IMR-90 (cell line): ENCODE measurements at regions of chr2 and their contacts with region 1.

Region 1: DNA sequence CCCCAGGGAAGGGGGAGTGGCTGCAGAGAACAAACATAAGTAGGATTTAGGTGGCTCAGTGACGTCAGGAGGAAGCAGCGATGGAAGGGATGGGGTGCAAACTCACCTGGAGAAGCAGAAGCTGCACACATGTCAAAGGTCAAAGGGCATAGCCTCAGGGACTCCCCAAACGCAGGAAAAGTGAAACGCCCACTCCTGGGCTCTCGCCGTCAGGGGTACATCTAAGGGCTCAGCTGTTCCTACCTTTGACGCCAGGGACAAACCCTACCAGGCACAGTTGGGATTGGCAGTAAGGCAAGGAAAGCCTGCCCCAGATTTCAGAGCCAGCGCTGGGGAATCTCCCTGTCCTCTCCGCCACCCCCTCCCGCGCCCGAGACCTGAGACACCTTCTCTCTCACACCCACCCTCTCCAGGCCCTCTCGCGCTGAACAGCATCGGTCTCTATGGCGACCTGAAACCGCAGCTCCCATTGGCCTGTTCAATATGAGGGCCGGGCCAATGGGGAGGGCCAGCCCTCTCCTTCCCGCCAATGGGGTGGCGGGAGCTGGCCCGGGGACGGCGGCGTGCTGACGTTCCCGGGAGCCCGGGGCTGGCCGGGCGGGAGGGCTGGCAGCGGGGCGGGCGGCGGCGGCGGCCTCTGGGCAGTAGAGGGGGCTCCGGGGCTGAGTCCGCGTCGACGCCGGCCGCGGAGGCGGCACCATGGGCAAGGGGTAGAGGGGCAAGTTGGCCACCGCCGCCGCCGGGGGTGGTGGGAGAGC is at the starts of genes CCDC148 and PKP4:
- DNase-seq: peak; percentile 89
- ATAC-seq: peak; percentile 92
- H3K4me3 ChIP-seq: peak within 1 kb of the TSS; percentile 90
- H3K27ac ChIP-seq: peak within 1 kb of the TSS; percentile 76
- H3K4me1 ChIP-seq: peaks cover 2% of the 10 kb centered on the region
- H3K27me3 ChIP-seq: peaks cover 4% of the 10 kb centered on the region; the same call in 1 of the 2 replicates
- CTCF ChIP-seq: peak; percentile 33
- POLR2A ChIP-seq: 0 out of 2 replicates have a peak, but pooled peaks have one; percentile 17
- RAD21 ChIP-seq: peak; percentile 4; the same call in 1 of the 2 replicates
- total RNA-seq, gene CCDC148: 0.18 and 0.56 TPM in 2 replicates
- total RNA-seq, gene PKP4: 37.5 and 37.8 TPM in 2 replicates

Region 2: DNA sequence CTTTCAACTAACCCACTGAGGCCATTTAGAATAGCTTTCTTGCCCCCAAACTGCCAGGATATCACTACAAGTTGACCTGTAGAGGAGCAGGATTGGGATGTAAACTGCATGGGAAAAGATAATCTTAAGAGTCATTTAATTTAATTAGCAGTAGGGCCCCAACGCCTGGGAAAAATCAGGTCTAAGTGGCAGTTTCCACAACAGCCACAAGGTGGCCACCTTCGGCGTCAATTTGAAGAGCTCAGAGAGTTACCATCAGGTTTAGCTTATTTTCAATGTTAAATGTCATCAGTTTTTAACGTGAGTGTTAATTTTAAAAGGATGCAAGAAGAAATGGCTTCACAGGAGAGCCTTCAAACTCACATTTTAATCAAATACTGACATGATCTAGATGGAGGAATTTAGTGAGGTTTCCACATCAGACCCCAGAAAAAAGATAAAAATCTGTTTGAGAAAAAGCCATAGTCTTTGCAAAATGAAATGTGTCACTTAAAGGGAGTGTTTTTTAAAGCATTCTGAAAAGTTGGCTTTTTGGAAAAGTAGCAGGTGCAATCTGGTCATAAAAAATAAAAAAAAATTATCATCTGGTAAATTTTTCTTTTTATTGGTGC is 432.1 kb before region 1 on chr2:
- CTCF ChIA-PET with region 1: no interaction called
- POLR2A ChIA-PET with region 1: no interaction called
- dilution Hi-C with region 1: no loop called
- in situ Hi-C with region 1: no loop called
- intact Hi-C with region 1: loop called (anchors 2 kb)
- DNase-seq: peak; percentile 31
- ATAC-seq: peak; percentile 76
- H3K4me3 ChIP-seq: no peak overlapping the region
- H3K27ac ChIP-seq: no peak overlapping the region
- H3K4me1 ChIP-seq: peaks cover 2% of the 10 kb centered on the region; the same call in 1 of the 2 replicates
- H3K27me3 ChIP-seq: peaks cover 6% of the 10 kb centered on the region; the same call in 1 of the 2 replicates
- CTCF ChIP-seq: peak; percentile 82
- POLR2A ChIP-seq: no peak
- RAD21 ChIP-seq: peak; percentile 70

Region 3: DNA sequence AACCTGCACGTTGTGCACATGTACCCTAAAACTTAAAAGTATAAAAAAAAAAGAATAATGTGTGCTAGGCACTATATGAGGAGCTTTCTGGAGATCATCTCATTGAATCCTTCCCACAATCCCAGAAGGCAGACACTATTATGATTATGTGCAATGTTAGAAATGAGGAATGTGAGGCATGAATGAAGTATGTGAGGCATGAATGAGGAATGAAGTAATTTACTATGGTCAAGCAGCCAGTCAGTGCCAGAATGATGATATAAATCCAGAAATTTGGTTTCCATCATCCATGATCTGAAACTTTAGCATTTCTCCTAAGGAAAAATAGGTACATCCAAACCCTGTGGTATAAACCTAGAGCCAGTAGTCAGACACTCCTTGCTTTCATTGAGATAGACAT is 42.0 kb before region 1 on chr2:
- CTCF ChIA-PET with region 1: no interaction called
- POLR2A ChIA-PET with region 1: no interaction called
- dilution Hi-C with region 1: no loop called
- in situ Hi-C with region 1: no loop called
- intact Hi-C with region 1: loop called (anchors 2 kb)
- DNase-seq: peak; percentile 64
- ATAC-seq: peak; percentile 66
- H3K4me3 ChIP-seq: no peak overlapping the region
- H3K27ac ChIP-seq: peak overlapping the region; percentile 34; the same call in 1 of the 2 replicates
- H3K4me1 ChIP-seq: peaks cover 10% of the 10 kb centered on the region; the same call in 1 of the 2 replicates
- H3K27me3 ChIP-seq: no peaks in the 10 kb centered on the region
- CTCF ChIP-seq: no peak
- POLR2A ChIP-seq: no peak
- RAD21 ChIP-seq: no peak

Region 4: DNA sequence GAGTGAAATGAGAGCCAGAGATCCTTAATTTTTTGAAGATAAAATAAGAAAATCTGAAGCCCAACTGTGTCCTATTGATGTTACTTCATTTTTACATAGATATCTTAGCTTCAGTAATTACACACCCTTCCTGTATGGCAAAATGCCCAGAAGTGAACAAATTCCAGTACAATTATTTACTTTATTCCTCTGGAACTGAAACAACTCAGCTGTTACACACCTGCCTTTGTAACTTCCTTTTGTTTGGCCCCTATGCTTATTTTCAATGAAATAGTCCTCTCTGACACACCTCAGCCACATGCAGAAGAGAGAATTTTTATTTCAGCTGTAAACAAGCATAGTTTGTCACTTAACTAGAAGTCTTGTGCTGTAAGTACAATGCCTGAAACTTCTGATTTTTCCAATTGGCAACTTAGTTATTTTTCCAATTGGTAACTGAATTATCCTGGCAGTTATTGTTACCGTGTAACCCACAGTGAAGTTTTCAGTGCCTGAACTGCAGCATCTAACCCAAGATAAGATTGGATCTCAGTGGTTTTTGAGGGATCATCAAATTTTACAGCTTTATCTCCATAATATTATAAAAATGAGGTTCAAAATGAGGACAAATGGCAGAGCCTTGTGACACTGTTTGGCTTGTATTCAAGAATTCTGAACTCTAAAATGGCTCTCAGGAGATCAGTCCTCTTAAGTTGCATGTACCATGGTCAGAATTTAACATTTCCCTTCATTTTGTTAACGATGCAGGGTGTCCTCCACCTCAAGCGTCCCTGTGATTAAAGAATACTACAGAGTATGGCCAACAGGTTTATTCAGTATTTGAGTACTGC is 82.9 kb after region 1 on chr2:
- CTCF ChIA-PET with region 1: no interaction called
- POLR2A ChIA-PET with region 1: no interaction called
- dilution Hi-C with region 1: no loop called
- in situ Hi-C with region 1: no loop called
- intact Hi-C with region 1: loop called (anchors 5 kb)
- DNase-seq: peak; percentile 90
- ATAC-seq: peak; percentile 46
- H3K4me3 ChIP-seq: no peak overlapping the region
- H3K27ac ChIP-seq: no peak overlapping the region
- H3K4me1 ChIP-seq: no peaks in the 10 kb centered on the region; the same call in 1 of the 2 replicates
- H3K27me3 ChIP-seq: no peaks in the 10 kb centered on the region
- CTCF ChIP-seq: no peak
- POLR2A ChIP-seq: no peak
- RAD21 ChIP-seq: no peak

Region 5: DNA sequence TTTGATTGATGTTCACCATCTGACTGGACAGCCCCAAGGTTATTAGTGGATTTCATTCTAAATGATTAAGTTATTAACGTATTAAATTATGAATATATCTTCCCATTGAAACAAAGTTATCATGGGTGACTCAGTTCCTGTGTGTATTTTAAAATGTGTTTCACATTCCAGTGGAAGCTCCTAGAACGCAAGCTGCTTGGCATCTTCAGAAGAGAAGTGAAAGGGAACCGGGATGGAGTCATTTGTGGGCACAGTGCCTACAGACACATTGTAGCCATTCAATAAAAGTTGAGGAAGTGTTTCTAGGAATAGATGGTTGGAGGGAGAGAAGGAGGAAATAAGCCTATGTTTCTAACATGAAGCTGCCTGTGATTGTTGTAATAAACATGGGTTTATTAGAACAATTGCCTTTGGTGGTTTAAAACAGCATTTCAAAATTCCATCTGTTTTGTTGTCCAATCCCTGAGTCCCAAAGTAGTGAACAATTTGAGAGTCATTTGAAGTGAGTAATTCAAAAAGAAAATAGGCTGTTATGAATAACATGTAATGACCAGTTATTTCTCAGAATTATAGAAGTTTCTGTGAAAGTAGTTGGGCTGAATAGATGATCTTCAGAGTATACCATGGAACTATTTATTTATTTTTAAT is 143.8 kb after region 1 on chr2:
- CTCF ChIA-PET with region 1: no interaction called
- POLR2A ChIA-PET with region 1: no interaction called
- dilution Hi-C with region 1: no loop called
- in situ Hi-C with region 1: no loop called
- intact Hi-C with region 1: loop called (anchors 5 kb)
- DNase-seq: peak; percentile 95
- ATAC-seq: peak; percentile 91
- H3K4me3 ChIP-seq: no peak overlapping the region
- H3K27ac ChIP-seq: no peak overlapping the region
- H3K4me1 ChIP-seq: peaks cover 8% of the 10 kb centered on the region
- H3K27me3 ChIP-seq: no peaks in the 10 kb centered on the region
- CTCF ChIP-seq: no peak
- POLR2A ChIP-seq: no peak
- RAD21 ChIP-seq: no peak

Region 6: GRCh38 chr2:158665536-158666302 is 209.2 kb after region 1 on chr2:
- CTCF ChIA-PET with region 1: no interaction called
- POLR2A ChIA-PET with region 1: no interaction called
- dilution Hi-C with region 1: no loop called
- in situ Hi-C with region 1: no loop called
- intact Hi-C with region 1: loop called (anchors 2 kb)
- DNase-seq: peak; percentile 76
- ATAC-seq: peak; percentile 70
- H3K4me3 ChIP-seq: no peak overlapping the region
- H3K27ac ChIP-seq: no peak overlapping the region
- H3K4me1 ChIP-seq: peaks cover 10% of the 10 kb centered on the region
- H3K27me3 ChIP-seq: no peaks in the 10 kb centered on the region
- CTCF ChIP-seq: no peak
- POLR2A ChIP-seq: no peak
- RAD21 ChIP-seq: no peak

Region 7: DNA sequence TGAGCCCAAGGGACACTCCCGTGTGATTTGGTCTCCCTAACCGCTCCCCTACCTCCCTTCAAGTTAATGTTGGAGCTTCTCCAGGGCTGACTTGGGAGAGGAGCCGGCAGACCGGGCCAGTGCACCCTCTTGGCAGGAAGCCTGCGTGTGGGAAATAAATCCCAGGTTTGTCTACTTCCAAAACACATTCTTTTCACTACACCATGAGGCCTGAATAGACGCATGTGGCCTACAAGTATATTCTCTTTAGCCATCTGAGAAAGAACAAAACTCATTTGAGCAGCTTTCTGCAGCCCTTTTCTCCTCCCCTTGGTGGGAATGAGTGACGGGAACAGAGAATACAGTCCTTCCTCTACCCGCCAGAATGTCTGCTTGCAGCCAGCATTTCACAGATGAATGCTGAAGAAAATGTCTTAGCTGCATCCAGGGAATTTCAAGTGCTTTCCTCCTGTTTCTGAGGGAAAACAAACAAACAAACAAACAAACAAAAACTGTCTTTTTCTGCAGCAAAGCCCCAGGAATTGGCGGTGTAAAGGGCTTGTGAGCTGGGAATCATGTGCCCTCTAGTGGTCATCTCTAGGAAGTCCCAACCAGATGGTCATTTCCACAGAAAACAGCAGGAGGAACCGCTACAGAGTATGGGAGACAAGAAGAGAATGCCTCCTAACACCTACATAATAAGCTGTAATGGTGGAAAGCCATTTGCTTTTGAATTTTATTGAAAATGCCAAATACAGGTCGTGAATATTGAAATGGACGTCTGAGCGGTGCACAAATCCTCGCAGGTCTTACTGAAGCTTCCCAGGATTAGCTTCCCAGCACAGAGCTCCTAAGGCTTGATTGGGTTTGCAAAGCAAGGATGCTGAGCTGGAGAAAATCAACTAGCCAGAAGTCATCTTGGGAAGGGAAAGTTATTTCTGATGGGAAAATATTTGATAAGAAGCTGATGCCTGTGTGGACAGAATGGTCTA is 297.4 kb after region 1 on chr2:
- CTCF ChIA-PET with region 1: interaction called, 6 read pairs
- POLR2A ChIA-PET with region 1: no interaction called
- dilution Hi-C with region 1: no loop called
- in situ Hi-C with region 1: loop called (anchors 10 kb)
- intact Hi-C with region 1: loop called (anchors 2 kb)
- DNase-seq: peak; percentile 68
- ATAC-seq: peak; percentile 95
- H3K4me3 ChIP-seq: no peak overlapping the region
- H3K27ac ChIP-seq: no peak overlapping the region
- H3K4me1 ChIP-seq: no peaks in the 10 kb centered on the region
- H3K27me3 ChIP-seq: peaks cover 11% of the 10 kb centered on the region
- CTCF ChIP-seq: peak; percentile 88
- POLR2A ChIP-seq: no peak
- RAD21 ChIP-seq: peak; percentile 88